ENCODE measurements at regions of chr19 and their contacts with region 1.

Region 1: GRCh38 chr19:10653715-10654492 is at the start of gene ILF3:
- DNase-seq: peak; percentile 100
- H3K4me3 Mint-ChIP-seq: peak within 1 kb of the TSS; percentile 93
- H3K27ac Mint-ChIP-seq: peak within 1 kb of the TSS; percentile 97
- H3K4me1 Mint-ChIP-seq: peaks cover 39% of the 10 kb centered on the region
- H3K27me3 Mint-ChIP-seq: no peaks in the 10 kb centered on the region
- total RNA-seq, gene ILF3: 399 to 408 TPM

Region 2: GRCh38 chr19:10424011-10424637 is 229.8 kb before region 1 on chr19:
- CTCF ChIA-PET with region 1: no interaction called
- intact Hi-C with region 1: loop called (anchors 5 kb)
- DNase-seq: peak; percentile 81
- H3K4me3 Mint-ChIP-seq: peak overlapping the region; percentile 67
- H3K27ac Mint-ChIP-seq: peak overlapping the region; percentile 91
- H3K4me1 Mint-ChIP-seq: peaks cover 70% of the 10 kb centered on the region
- H3K27me3 Mint-ChIP-seq: peaks cover 63% of the 10 kb centered on the region

Region 3: GRCh38 chr19:10543420-10544241 is 110.3 kb before region 1 on chr19 and contains the start of gene ATG4D:
- CTCF ChIA-PET with region 1: no interaction called
- intact Hi-C with region 1: loop called (anchors 1 kb)
- DNase-seq: peak; percentile 78
- H3K4me3 Mint-ChIP-seq: peak within 1 kb of the TSS; percentile 85
- H3K27ac Mint-ChIP-seq: peak within 1 kb of the TSS; percentile 84
- H3K4me1 Mint-ChIP-seq: peaks cover 16% of the 10 kb centered on the region
- H3K27me3 Mint-ChIP-seq: peaks cover 5% of the 10 kb centered on the region
- total RNA-seq, gene ATG4D: 21.6 to 22.5 TPM

Region 4: GRCh38 chr19:10602330-10603083 is 51.4 kb before region 1 on chr19:
- CTCF ChIA-PET with region 1: no interaction called
- intact Hi-C with region 1: loop called (anchors 1 kb)
- DNase-seq: peak; percentile 91
- H3K4me3 Mint-ChIP-seq: peak overlapping the region; percentile 98
- H3K27ac Mint-ChIP-seq: peak overlapping the region; percentile 100
- H3K4me1 Mint-ChIP-seq: peaks cover 24% of the 10 kb centered on the region
- H3K27me3 Mint-ChIP-seq: no peaks in the 10 kb centered on the region

Region 5: GRCh38 chr19:10835754-10836477 is 182.0 kb after region 1 on chr19 and contains the start of gene TMED1:
- CTCF ChIA-PET with region 1: no interaction called
- intact Hi-C with region 1: loop called (anchors 2 kb)
- DNase-seq: peak; percentile 98
- H3K4me3 Mint-ChIP-seq: peak within 1 kb of the TSS; percentile 94
- H3K27ac Mint-ChIP-seq: peak within 1 kb of the TSS; percentile 97
- H3K4me1 Mint-ChIP-seq: peaks cover 14% of the 10 kb centered on the region
- H3K27me3 Mint-ChIP-seq: no peaks in the 10 kb centered on the region
- total RNA-seq, gene TMED1: 15.3 to 16.7 TPM

Region 6: DNA sequence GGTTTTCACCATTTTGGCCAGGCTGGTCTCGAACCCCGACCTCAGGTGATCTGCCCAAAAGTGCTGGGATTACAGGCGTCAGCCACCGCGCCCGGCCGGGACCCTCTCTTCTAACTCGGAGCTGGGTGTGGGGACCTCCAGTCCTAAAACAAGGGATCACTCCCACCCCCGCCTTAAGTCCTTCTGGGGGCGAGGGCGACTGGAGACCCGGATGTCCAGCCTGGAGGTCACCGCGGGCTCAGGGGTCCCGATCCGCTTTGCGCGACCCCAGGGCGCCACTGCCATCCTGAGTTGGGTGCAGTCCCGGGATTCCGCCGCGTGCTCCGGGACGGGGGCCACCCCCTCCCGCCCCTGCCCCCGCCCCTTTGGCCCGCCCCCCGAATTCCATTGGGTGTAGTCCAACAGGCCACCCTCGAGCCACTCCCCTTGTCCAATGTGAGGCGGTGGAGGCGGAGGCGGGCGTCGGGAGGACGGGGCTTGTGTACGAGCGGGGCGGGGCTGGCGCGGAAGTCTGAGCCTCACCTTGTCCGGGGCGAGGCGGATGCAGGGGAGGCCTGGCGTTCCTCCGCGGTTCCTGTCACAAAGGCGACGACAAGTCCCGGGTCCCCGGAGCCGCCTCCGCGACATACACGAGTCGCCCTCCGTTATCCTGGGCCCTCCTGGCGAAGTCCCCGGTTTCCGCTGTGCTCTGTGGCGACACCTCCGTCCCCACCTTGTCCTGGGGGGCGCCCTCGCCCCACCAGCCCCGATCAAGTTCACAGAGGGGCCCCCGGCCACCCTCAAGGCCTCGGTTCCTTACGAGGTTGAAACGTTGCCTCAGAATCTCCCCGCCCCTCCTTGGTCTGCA is 436.4 kb after region 1 on chr19:
- CTCF ChIA-PET with region 1: no interaction called
- intact Hi-C with region 1: loop called (anchors 5 kb)
- DNase-seq: peak; percentile 99
- H3K4me3 Mint-ChIP-seq: peak overlapping the region; percentile 94
- H3K27ac Mint-ChIP-seq: peak overlapping the region; percentile 99
- H3K4me1 Mint-ChIP-seq: peaks cover 48% of the 10 kb centered on the region
- H3K27me3 Mint-ChIP-seq: no peaks in the 10 kb centered on the region